ENCODE measurements at regions of chr7 and their contacts with region 1.

Region 1: DNA sequence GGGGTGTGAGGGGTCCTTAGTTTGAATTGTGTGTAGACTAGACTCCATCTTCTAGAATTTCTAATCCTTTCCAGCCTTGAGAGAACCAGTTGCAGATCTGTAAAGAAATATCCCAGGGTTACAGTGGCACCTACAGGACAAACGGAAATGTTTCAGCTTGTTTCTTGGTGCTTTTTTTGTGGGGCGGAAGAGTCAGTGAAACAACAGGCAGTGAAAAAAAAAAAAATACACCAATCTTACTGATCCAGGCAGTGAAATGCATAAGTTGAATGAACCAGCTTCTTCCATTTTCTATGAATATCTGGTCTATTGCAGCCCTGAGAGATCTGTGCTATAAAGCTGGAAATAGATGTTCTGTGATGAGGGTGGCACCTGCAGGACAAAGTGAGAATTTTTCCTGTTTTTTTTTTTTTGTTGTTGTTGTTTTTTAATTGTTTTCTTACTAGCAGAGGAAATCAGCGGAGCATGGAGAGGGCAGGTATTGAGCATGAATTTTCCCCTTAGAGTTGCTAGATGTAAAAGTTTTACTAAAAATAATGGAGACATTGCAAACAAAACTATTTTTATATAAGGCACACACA is 81.9 kb upstream of the DYNC1I1 start:
- DNase-seq: peak; percentile 13
- CTCF ChIP-seq: peak; percentile 51

Region 2: GRCh38 chr7:95335093-95335492 is 355.4 kb before region 1 on chr7:
- CTCF ChIA-PET with region 1: no interaction called
- POLR2A ChIA-PET with region 1: no interaction called
- DNase-seq: no peak
- CTCF ChIP-seq: no peak

Region 3: GRCh38 chr7:95476904-95477594 is 213.4 kb before region 1 on chr7:
- CTCF ChIA-PET with region 1: interaction called, 10 read pairs
- POLR2A ChIA-PET with region 1: no interaction called
- DNase-seq: peak; percentile 37
- CTCF ChIP-seq: peak; percentile 76

Region 4: DNA sequence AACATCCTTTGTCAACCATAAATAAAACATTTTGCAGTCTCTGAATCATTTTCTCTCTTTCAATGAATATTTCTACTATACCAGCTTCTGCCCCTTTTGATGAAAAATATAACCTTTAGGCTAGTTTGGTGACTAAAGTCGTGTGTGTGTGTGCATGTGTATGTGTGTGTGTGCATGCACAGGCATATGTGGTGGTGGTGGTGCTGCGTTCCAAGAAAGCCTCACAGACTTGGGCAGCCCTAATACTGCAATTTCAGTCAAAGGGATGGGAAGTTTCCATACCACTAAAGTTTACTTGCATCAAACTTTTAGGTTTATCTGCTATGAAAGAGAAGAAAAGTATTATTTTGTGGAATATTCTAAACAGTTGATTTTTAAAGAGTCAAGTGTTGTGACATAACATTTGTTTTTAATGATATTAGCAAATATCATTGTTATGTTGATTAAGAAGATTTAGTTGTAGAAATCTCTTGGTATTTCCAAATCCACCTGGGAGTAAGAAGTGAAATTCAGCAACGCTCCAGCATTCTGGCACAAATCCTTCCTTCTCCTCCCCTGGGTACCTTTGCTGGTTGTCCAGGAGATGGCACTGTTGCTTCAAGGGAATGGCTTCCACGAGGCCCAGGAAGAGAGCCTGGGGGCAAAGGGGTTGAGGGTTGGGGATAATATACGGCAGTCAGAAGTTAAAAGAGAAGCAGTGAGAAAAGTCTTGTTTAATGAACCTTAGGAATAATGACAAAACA is 163.3 kb before region 1 on chr7:
- CTCF ChIA-PET with region 1: interaction called, 240 read pairs
- POLR2A ChIA-PET with region 1: no interaction called
- DNase-seq: peak; percentile 64
- CTCF ChIP-seq: peak; percentile 82

Region 5: DNA sequence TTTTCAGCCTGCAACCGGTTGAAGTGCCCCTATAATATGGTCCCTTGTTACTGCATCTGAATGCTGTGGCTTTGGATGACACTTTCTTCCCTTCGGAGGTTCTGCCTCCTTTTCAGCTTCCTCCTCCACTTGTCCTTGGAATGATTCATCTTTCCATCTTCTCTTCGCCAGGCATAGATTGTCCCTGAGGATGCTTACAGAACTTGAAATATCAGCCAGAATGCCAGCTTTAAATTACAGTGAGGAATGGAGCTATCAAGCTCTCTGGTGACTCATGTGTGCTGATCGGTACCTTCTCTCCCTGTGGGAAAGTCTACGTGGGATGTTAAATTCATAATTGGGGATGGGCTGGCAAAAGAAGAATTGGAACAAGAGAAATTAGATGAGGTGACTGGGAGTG is 48.3 kb before region 1 on chr7:
- CTCF ChIA-PET with region 1: interaction called, 10 read pairs
- POLR2A ChIA-PET with region 1: no interaction called
- DNase-seq: no peak
- CTCF ChIP-seq: no peak

Region 6: DNA sequence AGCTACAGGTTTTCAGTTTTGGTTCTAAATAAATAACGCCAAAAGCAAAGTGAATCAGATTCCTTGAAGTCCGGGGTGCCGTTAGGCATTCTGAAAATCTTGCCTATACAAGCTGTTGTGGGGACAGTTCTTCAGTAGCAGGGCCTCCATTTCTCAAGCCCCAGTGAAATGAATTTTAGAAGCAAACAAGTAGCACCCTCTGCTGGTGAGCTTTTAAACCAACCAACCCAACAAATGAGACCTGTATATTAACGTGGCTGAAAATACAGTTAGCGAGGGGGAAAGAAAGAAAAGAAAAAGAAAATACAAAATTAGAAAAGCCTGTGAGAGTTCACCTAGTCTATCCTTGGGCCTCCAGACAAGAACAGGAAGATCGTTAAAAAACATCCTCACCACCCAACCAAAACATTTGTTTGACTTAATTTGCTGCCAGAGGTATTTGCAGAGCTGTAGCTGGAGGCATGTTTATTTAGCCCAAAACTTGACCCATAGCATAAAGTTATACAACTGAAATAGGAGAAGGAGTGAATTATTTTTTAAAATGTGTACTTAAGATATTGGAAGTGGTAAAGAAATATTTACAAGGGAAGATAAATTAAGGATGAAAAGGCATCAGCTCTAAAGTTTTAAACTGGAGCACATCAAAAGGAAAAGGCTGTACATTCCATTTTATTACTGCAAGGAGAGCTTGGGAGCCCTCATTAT is 180.8 kb after region 1 on chr7:
- CTCF ChIA-PET with region 1: interaction called, 16 read pairs
- POLR2A ChIA-PET with region 1: no interaction called
- DNase-seq: peak; percentile 49
- CTCF ChIP-seq: peak; percentile 55

Measured in GM10248 (cell line).